OCI-LY7 (cell line): ENCODE measurements at regions of chr18 and their contacts with region 1.

Region 1: GRCh38 chr18:21740724-21741510 is at the start of gene MIB1:
- DNase-seq: peak; percentile 82
- H3K4me3 ChIP-seq: peak within 1 kb of the TSS; percentile 95
- H3K27ac ChIP-seq: peak within 1 kb of the TSS; percentile 80
- H3K4me1 ChIP-seq: peaks cover 38% of the 10 kb centered on the region
- CTCF ChIP-seq: no peak
- total RNA-seq, gene MIB1: 40.5 and 51.6 TPM in 2 replicates

Region 2: DNA sequence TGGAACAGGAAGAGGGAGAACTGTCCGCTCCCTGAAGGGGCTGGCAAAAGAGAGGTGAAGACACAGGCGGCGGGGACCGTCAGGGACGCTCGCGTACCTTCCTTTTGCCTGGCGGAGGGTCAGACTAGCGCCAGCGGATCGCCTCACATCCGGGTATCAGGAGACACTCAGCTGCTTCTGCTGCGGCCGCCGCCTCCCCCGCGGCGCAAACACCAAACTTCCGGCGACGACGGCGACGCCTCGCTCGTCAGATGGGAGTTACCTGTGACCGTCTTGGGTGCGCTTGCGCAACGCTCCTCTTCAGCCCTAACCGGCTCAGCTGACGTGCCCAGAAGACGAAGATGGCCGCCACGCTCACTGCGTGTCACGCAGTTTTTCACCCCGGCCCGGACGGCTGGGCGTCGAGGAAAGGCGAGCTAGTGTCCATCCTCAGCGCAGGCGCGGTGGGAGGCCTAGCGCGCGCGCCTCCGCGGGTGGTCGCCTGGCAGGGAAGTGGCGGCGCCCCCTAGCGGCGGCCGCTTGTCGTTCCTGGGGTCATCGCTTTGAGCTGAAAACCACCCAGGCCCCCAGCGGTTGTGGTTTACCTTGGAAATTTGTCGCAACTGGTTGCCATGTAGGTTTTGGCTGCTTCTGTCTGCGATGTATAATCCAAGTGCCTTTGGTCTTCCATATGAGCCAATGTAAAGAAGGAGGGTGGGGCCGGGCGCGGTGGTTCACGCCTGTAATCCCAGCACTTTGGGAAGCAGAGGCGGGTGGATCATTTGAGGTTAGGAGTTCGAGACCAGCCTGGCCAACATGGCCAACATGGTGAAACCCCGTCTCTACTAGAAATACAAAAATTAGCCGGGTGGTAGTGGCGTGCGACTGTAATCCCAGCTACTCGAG is 140.1 kb before region 1 on chr18 and contains the start of gene ESCO1:
- CTCF ChIA-PET with region 1: interaction called, 4 read pairs
- POLR2A ChIA-PET with region 1: interaction called, 4 read pairs
- intact Hi-C with region 1: loop called (anchors 1 kb)
- DNase-seq: peak; percentile 98
- H3K4me3 ChIP-seq: peak within 1 kb of the TSS; percentile 87
- H3K27ac ChIP-seq: peak within 1 kb of the TSS; percentile 92
- H3K4me1 ChIP-seq: peaks cover 34% of the 10 kb centered on the region
- CTCF ChIP-seq: peak; percentile 75
- total RNA-seq, gene ESCO1: 22.1 and 25.3 TPM in 2 replicates

Region 3: DNA sequence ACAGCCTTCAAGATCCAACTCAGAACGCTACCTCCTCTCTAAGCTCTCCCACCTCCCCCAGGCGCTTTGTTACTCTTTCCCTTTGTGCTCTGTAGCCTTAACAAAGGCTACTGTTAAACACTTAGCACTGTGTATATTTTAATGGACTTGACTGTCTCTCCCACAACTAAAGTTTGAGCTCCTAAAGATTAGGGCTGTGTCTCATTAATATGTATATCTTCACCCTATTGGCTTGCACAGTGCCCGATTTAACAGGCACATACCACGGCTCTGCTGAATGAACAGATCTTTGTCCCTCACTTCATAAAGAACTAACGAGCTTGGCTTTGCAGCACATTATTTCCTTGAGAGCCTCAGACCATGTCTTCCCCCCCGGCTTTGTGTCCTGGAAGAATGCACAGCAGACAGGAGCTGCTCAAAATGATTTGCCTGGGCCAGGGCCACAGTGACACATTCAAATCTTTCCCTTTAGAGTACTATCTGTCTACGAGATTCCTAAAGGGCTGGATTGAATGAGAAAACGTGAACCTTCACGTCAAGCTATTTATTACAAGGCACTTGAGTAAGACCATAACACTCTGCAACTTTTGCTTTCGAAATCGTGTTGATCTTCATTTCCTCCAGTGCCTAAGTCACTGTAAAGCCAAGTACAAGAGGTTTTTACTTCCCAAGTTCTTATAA is 58.4 kb before region 1 on chr18:
- CTCF ChIA-PET with region 1: no interaction called
- POLR2A ChIA-PET with region 1: interaction called, 6 read pairs
- intact Hi-C with region 1: loop called (anchors 5 kb)
- DNase-seq: peak; percentile 40
- H3K4me3 ChIP-seq: peak overlapping the region; percentile 25
- H3K27ac ChIP-seq: peak overlapping the region; percentile 21
- H3K4me1 ChIP-seq: peaks cover 49% of the 10 kb centered on the region
- CTCF ChIP-seq: no peak

Region 4: GRCh38 chr18:21704603-21705364 is 36.1 kb before region 1 on chr18 and contains the start of gene ABHD3:
- CTCF ChIA-PET with region 1: interaction called, 7 read pairs
- POLR2A ChIA-PET with region 1: interaction called, 50 read pairs
- intact Hi-C with region 1: loop called (anchors 1 kb)
- DNase-seq: peak; percentile 96
- H3K4me3 ChIP-seq: peak within 1 kb of the TSS; percentile 92
- H3K27ac ChIP-seq: peak within 1 kb of the TSS; percentile 95
- H3K4me1 ChIP-seq: peaks cover 44% of the 10 kb centered on the region
- CTCF ChIP-seq: peak; percentile 11; the same call in 1 of the 2 replicates
- total RNA-seq, gene ABHD3: 126 and 154 TPM in 2 replicates

Region 5: DNA sequence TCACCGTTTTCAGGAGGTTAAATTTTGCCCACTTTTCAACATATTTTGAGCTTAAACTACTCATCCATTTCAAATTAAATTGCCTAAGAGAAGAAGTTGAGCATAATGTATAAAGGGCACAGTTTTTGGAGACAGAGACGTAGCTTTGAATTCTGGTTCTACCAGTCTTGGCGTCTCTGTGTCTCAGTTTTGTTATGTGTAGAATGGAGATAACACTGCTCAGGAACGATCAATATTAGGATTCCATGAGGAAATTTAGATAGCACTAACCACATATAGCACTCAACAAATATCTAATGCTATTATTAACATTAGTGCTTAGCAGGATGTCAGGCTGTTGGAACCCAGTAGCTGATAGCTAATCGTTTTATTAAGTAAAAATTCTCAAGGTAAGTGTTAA is 388.0 kb after region 1 on chr18:
- CTCF ChIA-PET with region 1: no interaction called
- POLR2A ChIA-PET with region 1: no interaction called
- intact Hi-C with region 1: no loop called
- DNase-seq: no peak
- H3K4me3 ChIP-seq: no peak overlapping the region
- H3K27ac ChIP-seq: no peak overlapping the region
- H3K4me1 ChIP-seq: no peaks in the 10 kb centered on the region
- CTCF ChIP-seq: no peak